ENCODE measurements at regions of chr7 and their contacts with region 1.

Region 1: DNA sequence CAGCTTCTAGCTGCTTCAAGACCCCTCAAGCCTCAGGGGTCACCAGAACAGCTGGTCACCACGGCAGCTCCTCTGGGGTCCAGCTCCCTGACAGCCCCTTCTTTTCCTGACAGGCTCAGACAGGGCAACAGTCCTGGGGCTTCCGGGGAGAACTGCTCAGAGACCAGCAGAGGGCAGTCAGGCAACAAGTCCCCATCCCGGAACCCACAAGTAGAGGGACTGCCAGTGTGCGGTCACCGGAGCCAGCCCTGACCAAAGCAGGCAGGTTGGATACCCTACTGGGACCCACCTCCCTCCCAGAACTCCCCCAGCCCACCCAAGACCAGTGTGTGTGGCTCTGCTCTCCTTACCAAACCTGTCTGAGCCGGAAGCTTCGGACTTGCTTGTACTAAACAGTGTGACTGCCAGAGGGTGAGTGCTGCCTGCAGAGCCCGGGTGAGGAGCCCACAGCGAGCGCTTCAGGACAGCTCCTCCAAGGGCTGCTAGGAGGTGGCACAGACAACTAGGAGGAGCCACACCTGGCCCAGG is 40.3 kb downstream of the YKT6 start:
- DNase-seq: peak; percentile 82
- ATAC-seq: peak; percentile 86

Region 2: DNA sequence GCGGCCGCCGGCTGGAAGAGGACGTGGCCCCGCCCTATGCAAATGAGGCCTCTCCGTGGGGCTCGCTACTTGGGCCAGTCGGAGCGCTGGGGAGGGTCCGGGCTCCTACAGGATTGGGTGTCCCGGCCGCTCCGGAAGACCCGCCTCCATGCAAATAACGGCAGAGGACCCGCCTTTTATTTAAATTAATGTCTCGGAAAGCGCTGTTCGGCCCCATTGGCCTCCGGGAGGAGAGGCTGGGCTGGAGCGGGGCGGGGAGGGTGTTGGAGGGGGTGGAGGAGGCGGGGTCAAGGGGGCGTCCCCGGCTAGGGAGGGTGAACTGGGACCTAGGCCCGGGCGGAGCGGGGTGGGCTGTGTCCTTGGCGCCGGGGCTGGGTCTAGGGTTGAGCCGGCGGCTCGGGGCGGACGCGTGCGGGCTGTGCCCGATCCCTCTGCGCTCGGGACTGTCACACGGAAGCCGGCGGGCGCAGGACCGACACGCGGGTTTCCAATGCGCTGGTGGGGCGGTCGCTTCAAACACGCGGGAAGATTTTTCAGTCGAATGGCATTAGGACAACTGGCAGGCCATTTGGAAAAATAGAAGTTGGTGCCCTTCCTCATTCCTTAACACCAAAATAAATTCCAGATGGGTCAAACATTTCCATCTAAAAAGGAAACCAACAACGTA is 158.4 kb before region 1 on chr7:
- intact Hi-C with region 1: no loop called
- DNase-seq: peak; percentile 98
- ATAC-seq: peak; percentile 98

Region 3: GRCh38 chr7:44307301-44307900 is 66.4 kb after region 1 on chr7:
- intact Hi-C with region 1: loop called (anchors 10 kb)
- DNase-seq: peak; percentile 56
- ATAC-seq: peak; percentile 49

Region 4: DNA sequence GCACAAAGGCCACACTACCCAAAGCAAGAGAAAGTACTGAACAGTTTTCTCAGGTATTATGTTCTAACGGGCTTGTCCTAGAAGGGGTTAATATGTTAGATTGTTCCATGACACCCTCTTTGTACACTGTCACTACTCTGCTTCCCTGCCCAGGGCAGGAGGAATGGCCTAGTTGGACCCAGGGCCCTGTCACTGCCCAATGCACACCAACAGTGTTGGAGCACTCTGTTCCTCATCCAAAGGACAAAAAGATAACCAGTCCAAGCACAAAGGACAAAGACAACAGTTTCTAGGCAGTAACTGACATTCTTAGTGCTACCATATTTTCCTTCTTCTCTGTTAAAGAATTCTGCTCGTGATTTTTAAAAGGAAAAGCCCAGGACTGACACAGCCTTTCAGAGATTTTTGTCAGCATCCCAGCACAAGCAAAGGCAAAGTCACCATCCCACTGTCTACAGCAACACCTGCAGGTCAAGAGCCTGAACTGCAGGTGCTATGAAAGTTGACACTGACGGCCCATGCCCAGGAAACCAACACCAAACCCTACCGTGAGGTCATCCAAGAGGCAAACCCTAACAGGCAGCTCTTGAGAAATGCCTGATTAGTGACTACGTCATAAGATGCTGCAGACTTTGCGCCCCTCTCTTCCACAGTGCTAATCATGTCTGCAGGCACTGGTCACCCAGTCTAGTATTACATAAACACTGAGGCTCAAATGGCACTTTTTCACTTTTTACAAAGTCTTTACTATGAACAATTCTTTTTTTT is 236.2 kb after region 1 on chr7:
- intact Hi-C with region 1: loop called (anchors 10 kb)
- DNase-seq: no peak
- ATAC-seq: peak; percentile 82

Region 5: DNA sequence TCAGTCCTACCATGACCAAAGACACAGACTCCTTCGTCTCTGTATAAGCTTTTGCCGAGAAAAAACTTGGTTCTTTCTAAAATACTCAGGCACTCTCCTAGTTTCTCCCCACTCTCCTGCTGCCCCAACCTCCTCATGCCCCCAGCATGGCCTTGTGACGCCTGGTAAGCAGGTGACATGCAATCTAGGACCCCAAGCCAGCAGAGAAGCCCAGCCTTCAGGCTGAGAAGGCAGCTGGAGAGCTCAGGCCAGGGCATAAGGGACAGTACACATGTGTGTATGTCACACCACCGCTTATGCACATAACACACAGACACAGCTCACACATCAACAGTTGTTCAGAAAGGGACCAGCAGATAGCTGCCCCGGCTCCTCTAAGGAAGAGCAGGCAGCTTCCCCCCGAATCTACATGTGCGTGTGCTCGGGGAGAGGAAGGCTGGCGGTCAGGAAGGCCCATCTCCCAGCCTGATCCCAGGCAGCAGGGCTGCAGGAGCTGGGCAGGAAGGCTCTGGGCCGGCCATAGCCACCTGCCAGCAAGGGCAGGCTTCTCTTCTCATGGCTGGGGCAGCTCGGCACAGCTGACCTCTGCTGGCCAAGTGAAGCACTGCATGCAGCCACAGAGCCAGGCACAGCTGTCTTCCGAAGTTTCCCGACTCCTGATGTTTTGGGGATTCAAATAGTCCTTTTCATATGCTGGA is 324.2 kb after region 1 on chr7:
- intact Hi-C with region 1: loop called (anchors 10 kb)
- DNase-seq: peak; percentile 77
- ATAC-seq: peak; percentile 88

Measured in sciatic nerve (tissue), 2 donors.